ENCODE measurements at regions of chr16 and their contacts with region 1.

Region 1: DNA sequence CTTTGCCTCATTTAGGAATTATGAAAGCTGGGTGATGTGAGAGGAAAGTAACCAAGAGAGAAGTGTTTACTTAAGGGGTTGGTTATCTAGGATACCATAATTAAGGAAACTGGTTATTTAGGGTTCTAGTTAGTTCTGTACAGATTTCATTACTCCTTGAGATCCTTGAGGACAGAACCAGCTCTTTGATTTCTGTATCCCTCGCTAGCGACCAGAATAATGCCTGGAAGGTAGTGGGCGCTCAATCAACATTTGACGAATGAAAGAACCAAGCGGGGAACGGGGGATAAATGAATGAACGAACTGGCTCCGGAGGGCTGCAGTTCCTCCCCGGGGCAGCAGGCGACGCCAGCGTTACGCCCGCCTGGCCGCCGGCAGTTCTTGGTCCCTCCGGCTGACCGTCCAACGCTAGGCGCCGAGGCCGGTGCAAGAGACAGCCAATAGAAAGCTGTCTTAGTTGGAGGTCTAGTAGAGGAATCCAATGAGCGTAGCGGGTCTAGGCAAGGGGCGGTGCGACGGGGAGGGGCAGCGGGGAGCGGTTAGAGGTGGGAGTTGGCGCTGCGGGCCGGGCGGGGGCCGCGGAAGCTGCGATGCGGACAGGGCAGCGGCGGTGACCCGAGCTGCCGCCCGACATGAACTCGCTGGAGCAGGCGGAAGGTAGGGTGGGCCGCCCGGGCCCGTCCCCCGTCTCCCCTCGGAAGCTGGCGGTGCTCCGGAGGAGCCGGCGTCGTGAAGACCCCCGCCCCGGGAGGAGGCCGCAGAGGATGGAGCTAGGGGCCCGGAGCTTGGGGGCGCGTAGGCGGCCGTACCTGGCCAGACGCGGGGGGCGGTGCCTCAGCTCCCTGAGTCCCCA is at the start of gene CNEP1R1:
- DNase-seq: peak; percentile 82 to 95 (median 92)
- ATAC-seq: peak; percentile 98
- H3K4me3 ChIP-seq: peak within 1 kb of the TSS; percentile 97
- H3K4me3 Mint-ChIP-seq: peak within 1 kb of the TSS; percentile 88 to 99 (median 96)
- H3K27ac ChIP-seq: peak within 1 kb of the TSS; percentile 81
- H3K27ac Mint-ChIP-seq: peak within 1 kb of the TSS; percentile 87 to 97 (median 94)
- H3K4me1 ChIP-seq: peaks cover 11 to 16% of the 10 kb centered on the region in 2 donors
- H3K4me1 Mint-ChIP-seq: peaks cover 5 to 42% (median 28%) of the 10 kb centered on the region in 7 donors
- H3K27me3 ChIP-seq: no peaks in the 10 kb centered on the region
- H3K27me3 Mint-ChIP-seq: peaks cover 0 to 16% (median 0%) of the 10 kb centered on the region in 5 donors
- total RNA-seq, gene CNEP1R1: 26.8 to 41.0 (median 34.3) TPM

Region 2: DNA sequence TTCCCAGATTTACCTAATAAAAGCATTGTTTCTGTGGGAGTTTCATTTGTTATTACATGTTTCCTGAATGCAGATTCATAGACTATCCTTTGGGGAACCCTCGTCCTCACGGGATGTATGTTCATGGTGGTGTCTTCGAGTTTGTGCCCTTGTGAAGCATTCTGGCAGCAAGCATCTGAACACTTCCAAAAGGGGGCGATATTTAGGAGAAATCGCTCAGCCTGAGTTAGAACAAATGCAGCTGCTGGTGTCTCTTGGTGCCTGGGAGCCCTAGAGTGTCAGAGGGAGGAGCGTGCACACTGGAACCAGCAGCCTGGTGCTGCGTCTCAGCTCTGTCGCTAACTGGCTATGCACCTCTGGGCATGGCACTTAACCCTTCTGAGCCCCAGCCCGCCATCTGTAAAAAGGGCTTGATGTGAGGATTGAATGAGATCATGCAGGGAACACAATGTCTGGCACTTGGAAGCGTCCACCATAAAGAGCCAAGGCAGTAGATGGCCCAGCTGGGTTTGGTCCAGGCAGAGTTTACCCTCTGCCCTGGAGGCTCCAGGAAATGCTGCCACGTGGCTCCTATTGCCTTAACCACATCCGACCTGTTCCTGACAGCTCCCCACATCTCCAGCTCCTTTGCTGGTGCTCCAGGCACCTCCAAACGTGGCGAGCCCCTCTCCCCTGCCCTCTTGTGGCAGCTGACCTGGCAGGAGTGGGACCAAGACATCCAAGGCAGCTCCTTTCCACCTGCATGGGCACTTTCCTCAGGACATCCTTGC is 676.3 kb before region 1 on chr16:
- CTCF ChIA-PET with region 1: no interaction called
- POLR2A ChIA-PET with region 1: no interaction called
- intact Hi-C with region 1: no loop called
- DNase-seq: no peak
- ATAC-seq: no peak
- H3K4me3 ChIP-seq: no peak overlapping the region
- H3K4me3 Mint-ChIP-seq: no peak overlapping the region
- H3K27ac ChIP-seq: no peak overlapping the region
- H3K27ac Mint-ChIP-seq: no peak overlapping the region
- H3K4me1 ChIP-seq: no peaks in the 10 kb centered on the region
- H3K4me1 Mint-ChIP-seq: peaks cover 0 to 7% (median 4%) of the 10 kb centered on the region in 7 donors
- H3K27me3 ChIP-seq: no peaks in the 10 kb centered on the region
- H3K27me3 Mint-ChIP-seq: peaks cover 2 to 34% (median 26%) of the 10 kb centered on the region in 5 donors

Region 3: DNA sequence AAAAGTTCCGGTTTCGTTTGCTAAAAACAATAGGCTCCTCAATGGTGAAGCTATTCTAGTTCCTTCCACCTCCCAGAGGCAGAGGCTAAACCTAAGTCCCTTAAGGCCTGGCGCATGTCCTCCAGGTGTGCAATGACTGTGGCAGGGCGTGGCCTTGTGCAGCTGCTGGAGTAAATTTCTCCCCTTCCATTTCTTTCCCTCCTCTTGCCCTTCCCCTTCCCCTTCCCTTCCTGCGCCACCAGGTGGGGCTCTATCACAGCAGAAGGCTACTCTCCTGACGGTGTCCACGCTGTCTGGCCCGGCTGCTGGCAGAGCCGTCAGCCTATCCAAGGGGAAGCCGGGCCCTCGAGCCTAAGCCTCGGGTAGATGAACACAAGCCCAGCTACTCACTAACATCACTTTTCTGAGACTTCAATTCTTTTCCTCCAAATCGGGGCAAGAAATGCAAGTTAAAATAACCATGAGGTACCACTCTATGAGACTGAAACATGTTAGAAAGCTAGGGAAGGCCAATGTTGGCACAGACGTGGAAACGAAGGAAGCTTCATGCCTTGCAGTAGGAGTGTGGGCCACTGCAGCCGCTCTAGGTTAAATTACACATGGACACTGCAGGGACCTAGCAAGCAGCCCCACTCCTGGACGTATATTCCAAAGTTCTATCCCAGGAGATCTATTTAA is 616.9 kb before region 1 on chr16:
- CTCF ChIA-PET with region 1: no interaction called
- POLR2A ChIA-PET with region 1: no interaction called
- intact Hi-C with region 1: loop called in 1 of 2 experiments (anchors 5 kb)
- DNase-seq: peak; percentile 38 to 67 (median 60)
- ATAC-seq: peak; percentile 71
- H3K4me3 ChIP-seq: no peak overlapping the region
- H3K4me3 Mint-ChIP-seq: peak overlapping the region in 3 of 10 donors; percentile 12 to 53 (median 17)
- H3K27ac ChIP-seq: no peak overlapping the region
- H3K27ac Mint-ChIP-seq: no peak overlapping the region
- H3K4me1 ChIP-seq: no peaks in the 10 kb centered on the region
- H3K4me1 Mint-ChIP-seq: no peaks in the 10 kb centered on the region
- H3K27me3 ChIP-seq: no peaks in the 10 kb centered on the region
- H3K27me3 Mint-ChIP-seq: peaks cover 5 to 10% (median 6%) of the 10 kb centered on the region in 5 donors

Region 4: GRCh38 chr16:50065624-50066481 is 40.9 kb after region 1 on chr16 and contains the start of gene HEATR3:
- CTCF ChIA-PET with region 1: interaction called, 5 read pairs
- POLR2A ChIA-PET with region 1: interaction called, 16 read pairs
- intact Hi-C with region 1: loop called (anchors 1 kb)
- DNase-seq: peak; percentile 86 to 96 (median 90)
- ATAC-seq: peak; percentile 93
- H3K4me3 ChIP-seq: peak within 1 kb of the TSS; percentile 91
- H3K4me3 Mint-ChIP-seq: peak within 1 kb of the TSS; percentile 80 to 97 (median 92)
- H3K27ac ChIP-seq: peak within 1 kb of the TSS; percentile 81
- H3K27ac Mint-ChIP-seq: peak within 1 kb of the TSS; percentile 55 to 96 (median 93)
- H3K4me1 ChIP-seq: peaks cover 17 to 18% of the 10 kb centered on the region in 2 donors
- H3K4me1 Mint-ChIP-seq: peaks cover 34 to 49% (median 44%) of the 10 kb centered on the region in 7 donors
- H3K27me3 ChIP-seq: no peaks in the 10 kb centered on the region
- H3K27me3 Mint-ChIP-seq: no peaks in the 10 kb centered on the region
- total RNA-seq, gene HEATR3: 12.5 to 27.5 (median 23.5) TPM

Region 5: DNA sequence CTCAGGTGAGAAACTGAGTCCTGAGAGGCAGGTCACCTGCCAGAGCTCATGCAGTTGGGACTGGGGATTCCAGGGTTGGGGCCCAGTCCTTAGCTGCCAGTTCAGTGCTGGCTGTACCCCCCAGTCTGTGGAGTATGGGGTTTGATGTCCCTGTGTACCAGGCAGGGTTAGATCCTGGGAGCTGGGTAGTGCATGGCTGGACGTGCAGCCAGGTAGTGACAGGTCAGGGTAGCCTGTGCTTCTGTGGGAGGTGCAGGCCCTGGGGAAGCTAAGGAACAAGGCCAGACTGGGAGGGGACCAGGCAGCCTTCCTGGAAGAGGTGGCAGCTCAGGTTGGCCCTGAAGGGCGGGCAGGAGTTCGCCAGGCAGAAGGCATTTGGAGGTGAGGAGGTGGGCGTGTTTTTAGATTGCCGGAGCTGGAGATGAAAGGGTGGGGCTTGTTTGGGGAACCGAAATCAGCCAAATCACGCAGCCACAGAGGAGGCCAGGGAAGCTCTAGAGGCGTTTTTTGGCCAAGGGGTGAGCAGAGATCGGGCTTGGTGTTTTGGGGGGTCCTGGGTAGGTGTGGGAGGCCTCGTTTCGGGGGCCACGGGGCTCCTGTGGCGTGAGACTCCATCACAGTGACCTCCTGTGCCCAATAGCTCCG is 248.9 kb after region 1 on chr16:
- CTCF ChIA-PET with region 1: interaction called, 3 read pairs
- POLR2A ChIA-PET with region 1: no interaction called
- intact Hi-C with region 1: loop called (anchors 2 to 10 kb)
- DNase-seq: peak in 5 of 9 donors; percentile 26 to 52 (median 40)
- ATAC-seq: peak; percentile 65
- H3K4me3 ChIP-seq: peak overlapping the region; percentile 67
- H3K4me3 Mint-ChIP-seq: peak overlapping the region; percentile 83 to 98 (median 92)
- H3K27ac ChIP-seq: peak overlapping the region; percentile 88
- H3K27ac Mint-ChIP-seq: peak overlapping the region; percentile 95 to 99 (median 99)
- H3K4me1 ChIP-seq: peaks cover 93% of the 10 kb centered on the region in 2 donors
- H3K4me1 Mint-ChIP-seq: peaks cover 72 to 99% (median 93%) of the 10 kb centered on the region in 7 donors
- H3K27me3 ChIP-seq: no peaks in the 10 kb centered on the region
- H3K27me3 Mint-ChIP-seq: no peaks in the 10 kb centered on the region

Region 6: GRCh38 chr16:50354629-50355456 is 329.9 kb after region 1 on chr16:
- CTCF ChIA-PET with region 1: interaction called, 10 read pairs
- POLR2A ChIA-PET with region 1: no interaction called
- intact Hi-C with region 1: loop called in 1 of 2 experiments (anchors 1 kb)
- DNase-seq: peak in 5 of 9 donors; percentile 32 to 63 (median 51)
- ATAC-seq: peak; percentile 68
- H3K4me3 ChIP-seq: no peak overlapping the region
- H3K4me3 Mint-ChIP-seq: peak overlapping the region in 1 of 10 donors; percentile 21
- H3K27ac ChIP-seq: peak overlapping the region; percentile 31
- H3K27ac Mint-ChIP-seq: peak overlapping the region in 8 of 9 donors; percentile 2 to 91 (median 68)
- H3K4me1 ChIP-seq: no peaks in the 10 kb centered on the region
- H3K4me1 Mint-ChIP-seq: peaks cover 9 to 41% (median 25%) of the 10 kb centered on the region in 7 donors
- H3K27me3 ChIP-seq: no peaks in the 10 kb centered on the region
- H3K27me3 Mint-ChIP-seq: no peaks in the 10 kb centered on the region

Region 7: GRCh38 chr16:50665128-50665878 is 640.4 kb after region 1 on chr16:
- CTCF ChIA-PET with region 1: no interaction called
- POLR2A ChIA-PET with region 1: no interaction called
- intact Hi-C with region 1: loop called (anchors 1 kb)
- DNase-seq: peak; percentile 71 to 90 (median 77)
- ATAC-seq: peak; percentile 80
- H3K4me3 ChIP-seq: peak overlapping the region; percentile 60
- H3K4me3 Mint-ChIP-seq: peak overlapping the region; percentile 73 to 87 (median 84)
- H3K27ac ChIP-seq: peak overlapping the region; percentile 62
- H3K27ac Mint-ChIP-seq: peak overlapping the region; percentile 82 to 97 (median 89)
- H3K4me1 ChIP-seq: peaks cover 17% of the 10 kb centered on the region in 2 donors
- H3K4me1 Mint-ChIP-seq: peaks cover 28 to 49% (median 44%) of the 10 kb centered on the region in 7 donors
- H3K27me3 ChIP-seq: no peaks in the 10 kb centered on the region
- H3K27me3 Mint-ChIP-seq: no peaks in the 10 kb centered on the region

Region 8: GRCh38 chr16:50741808-50742575 is 717.1 kb after region 1 on chr16 and contains the start of gene CYLD:
- CTCF ChIA-PET with region 1: interaction called, 5 read pairs
- POLR2A ChIA-PET with region 1: no interaction called
- intact Hi-C with region 1: loop called (anchors 1 to 5 kb)
- DNase-seq: peak; percentile 95 to 100 (median 100)
- ATAC-seq: peak; percentile 94
- H3K4me3 ChIP-seq: peak within 1 kb of the TSS; percentile 70
- H3K4me3 Mint-ChIP-seq: peak within 1 kb of the TSS; percentile 90 to 100 (median 96)
- H3K27ac ChIP-seq: peak within 1 kb of the TSS; percentile 100
- H3K27ac Mint-ChIP-seq: peak within 1 kb of the TSS; percentile 94 to 99 (median 98)
- H3K4me1 ChIP-seq: peaks cover 7 to 38% of the 10 kb centered on the region in 2 donors
- H3K4me1 Mint-ChIP-seq: peaks cover 28 to 52% (median 40%) of the 10 kb centered on the region in 7 donors
- H3K27me3 ChIP-seq: no peaks in the 10 kb centered on the region
- H3K27me3 Mint-ChIP-seq: no peaks in the 10 kb centered on the region
- total RNA-seq, gene CYLD: 259 to 393 (median 336) TPM